ENCODE measurements at regions of chr16 and their contacts with region 1.

Region 1: DNA sequence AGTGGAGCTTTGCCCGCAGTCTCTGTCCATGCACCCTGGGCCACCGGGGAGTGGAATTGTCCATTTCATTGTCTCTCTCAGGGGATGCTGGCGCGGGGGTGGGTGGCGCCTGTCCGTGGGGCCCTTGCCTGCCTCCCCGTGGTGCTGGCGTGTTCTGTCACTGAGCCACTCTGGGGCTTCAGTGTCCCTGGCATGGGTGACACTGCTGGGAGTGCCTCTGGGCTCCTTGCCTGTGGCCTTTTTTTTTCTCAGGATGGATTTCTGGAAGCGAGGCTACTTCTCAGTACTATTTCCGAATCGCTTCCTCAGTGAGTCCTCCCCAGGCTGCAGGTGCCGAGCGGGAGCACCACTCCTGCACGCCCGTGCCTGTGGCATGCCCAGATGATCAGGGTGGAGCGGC is 55.0 kb downstream of the PDPK1 start:
- DNase-seq: no peak
- H3K4me3 ChIP-seq: no peak overlapping the region
- H3K27ac ChIP-seq: no peak overlapping the region
- H3K4me1 ChIP-seq: no peaks in the 10 kb centered on the region
- H3K27me3 ChIP-seq: no peaks in the 10 kb centered on the region
- CTCF ChIP-seq: no peak
- EP300 ChIP-seq: no peak
- POLR2A ChIP-seq: no peak
- RAD21 ChIP-seq: no peak

Region 2: GRCh38 chr16:2486645-2487516 is 105.9 kb before region 1 on chr16:
- CTCF ChIA-PET with region 1: no interaction called
- POLR2A ChIA-PET with region 1: no interaction called
- DNase-seq: no peak
- H3K4me3 ChIP-seq: no peak overlapping the region
- H3K27ac ChIP-seq: no peak overlapping the region
- H3K4me1 ChIP-seq: peaks cover 0 to 3% (median 0%) of the 10 kb centered on the region in 4 experiments; a peak in 1 of 7 replicates
- H3K27me3 ChIP-seq: no peaks in the 10 kb centered on the region; a peak in 1 of 7 replicates
- CTCF ChIP-seq: peak in 1 of 3 experiments; percentile 21; a peak in 1 of 4 replicates
- EP300 ChIP-seq: no peak
- POLR2A ChIP-seq: no peak
- RAD21 ChIP-seq: peak; percentile 40 to 47; a peak in 2 of 4 replicates

Region 3: DNA sequence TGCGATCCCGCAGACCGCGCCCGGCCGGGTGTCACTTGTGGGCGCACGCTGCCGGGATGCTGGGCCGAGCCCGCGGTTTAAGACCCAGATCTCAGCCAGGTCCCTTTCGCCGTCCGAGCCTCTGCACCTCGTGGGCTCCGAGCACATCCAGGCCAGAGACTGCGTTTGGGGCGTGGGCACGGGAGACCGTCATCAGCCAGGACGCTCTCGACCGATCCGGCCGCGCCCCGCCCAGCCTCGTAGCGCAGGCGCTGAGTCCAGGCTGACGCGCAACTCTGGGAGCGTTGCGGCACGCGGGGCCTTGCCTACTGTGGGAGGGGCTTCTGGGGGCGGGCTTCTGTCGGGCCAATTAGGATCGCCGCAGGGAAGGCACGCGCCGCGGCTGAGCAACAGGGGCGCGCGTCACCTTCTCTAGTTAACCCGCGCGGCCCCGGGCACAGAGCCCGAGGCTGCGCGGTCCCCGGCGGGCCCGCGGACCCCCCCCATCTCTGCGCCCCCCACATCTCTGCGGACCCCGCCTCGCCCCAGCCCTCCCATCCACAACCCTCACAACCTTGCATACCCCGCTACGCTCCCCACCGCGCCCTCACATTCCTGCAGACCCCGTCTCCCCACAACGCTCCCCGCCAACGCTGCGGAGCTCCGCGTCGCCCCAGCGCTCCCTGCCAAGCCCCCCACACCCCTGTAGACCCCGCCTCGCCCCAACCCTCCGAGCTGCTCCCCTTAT is 60.9 kb before region 1 on chr16:
- CTCF ChIA-PET with region 1: no interaction called
- POLR2A ChIA-PET with region 1: no interaction called
- DNase-seq: peak; percentile 88 to 95
- H3K4me3 ChIP-seq: peak overlapping the region; percentile 63 to 76 (median 72)
- H3K27ac ChIP-seq: peak overlapping the region; percentile 50; the same call in 1 of the 2 replicates
- H3K4me1 ChIP-seq: peaks cover 0 to 9% (median 7%) of the 10 kb centered on the region in 4 experiments; a peak in 4 of 7 replicates
- H3K27me3 ChIP-seq: no peaks in the 10 kb centered on the region
- CTCF ChIP-seq: no peak
- EP300 ChIP-seq: peak in 1 of 2 experiments; percentile 21; a peak in 1 of 3 replicates
- POLR2A ChIP-seq: peak; percentile 88 to 89
- RAD21 ChIP-seq: no peak

Region 4: GRCh38 chr16:2603165-2604015 is 10.6 kb after region 1 on chr16:
- CTCF ChIA-PET with region 1: no interaction called
- POLR2A ChIA-PET with region 1: interaction called, 10 read pairs
- DNase-seq: peak; percentile 86 to 95
- H3K4me3 ChIP-seq: peak overlapping the region; percentile 80 to 95 (median 88)
- H3K27ac ChIP-seq: peak overlapping the region; percentile 84
- H3K4me1 ChIP-seq: peaks cover 0 to 2% (median 0%) of the 10 kb centered on the region in 4 experiments; a peak in 1 of 7 replicates
- H3K27me3 ChIP-seq: no peaks in the 10 kb centered on the region
- CTCF ChIP-seq: 0 out of 4 replicates have a peak, but pooled peaks of 1 of the 3 experiments have one; percentile 14
- EP300 ChIP-seq: peak in 1 of 2 experiments; percentile 62; a peak in 1 of 3 replicates
- POLR2A ChIP-seq: peak; percentile 96 to 97
- RAD21 ChIP-seq: no peak

Region 5: GRCh38 chr16:2854700-2855309 is 262.0 kb after region 1 on chr16:
- CTCF ChIA-PET with region 1: no interaction called
- POLR2A ChIA-PET with region 1: no interaction called
- DNase-seq: peak in 1 of 2 experiments; percentile 80
- H3K4me3 ChIP-seq: no peak overlapping the region
- H3K27ac ChIP-seq: no peak overlapping the region
- H3K4me1 ChIP-seq: peaks cover 3 to 12% (median 6%) of the 10 kb centered on the region in 4 experiments; a peak in 5 of 7 replicates
- H3K27me3 ChIP-seq: peaks cover 2 to 21% (median 8%) of the 10 kb centered on the region in 4 experiments; a peak in 4 of 7 replicates
- CTCF ChIP-seq: peak; percentile 62 to 74 (median 65)
- EP300 ChIP-seq: no peak
- POLR2A ChIP-seq: no peak
- RAD21 ChIP-seq: peak; percentile 34 to 39